ENCODE measurements at regions of chr1 and their contacts with region 1.

Region 1: DNA sequence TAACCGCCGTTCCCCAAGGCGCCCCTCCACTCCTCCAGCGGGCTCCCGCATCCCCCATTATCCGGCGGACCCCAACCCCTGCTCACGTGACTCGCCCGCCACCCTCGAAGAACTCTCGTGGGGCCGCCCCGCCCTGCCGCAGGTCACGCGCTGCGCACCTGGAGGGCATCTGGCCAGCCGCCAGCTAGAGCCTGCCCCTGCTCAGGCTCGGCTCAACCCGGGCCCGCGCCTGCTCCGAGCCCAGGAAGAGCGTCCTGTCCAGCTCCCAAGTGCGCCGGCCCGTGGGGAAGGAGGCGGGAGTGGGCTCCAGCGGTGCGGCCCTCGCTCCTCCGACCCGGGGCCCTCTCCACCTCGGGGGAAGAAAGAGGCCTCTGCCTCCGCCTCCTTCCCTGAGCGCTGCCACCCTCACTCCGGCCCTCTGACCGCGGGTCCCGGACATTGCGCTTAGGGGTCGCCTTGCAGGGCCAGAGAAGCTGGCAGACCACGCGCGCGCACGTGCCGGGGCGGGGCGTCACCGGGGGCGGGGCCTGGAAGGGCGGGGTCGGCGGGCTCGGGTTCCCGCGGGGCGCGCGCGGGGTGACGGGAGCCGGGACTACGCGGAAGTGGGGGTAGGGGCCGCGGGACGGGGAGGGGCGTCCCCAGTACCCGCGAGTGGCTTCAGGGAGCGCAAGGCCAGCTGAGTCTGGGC is 28.4 kb downstream of the HMGN2 start:
- DNase-seq: peak; percentile 64 to 93 (median 81)
- ATAC-seq: peak; percentile 77 to 81 (median 79)
- H3K4me3 ChIP-seq: peak overlapping the region; percentile 88 to 89
- H3K4me3 Mint-ChIP-seq: peak overlapping the region; percentile 77 to 86 (median 86)
- H3K27ac ChIP-seq: peak overlapping the region; percentile 92
- H3K27ac Mint-ChIP-seq: peak overlapping the region; percentile 93 to 94
- H3K4me1 ChIP-seq: peaks cover 5 to 24% of the 10 kb centered on the region in 2 experiments
- H3K4me1 Mint-ChIP-seq: peaks cover 7 to 17% (median 12%) of the 10 kb centered on the region in 3 donors
- H3K27me3 ChIP-seq: no peaks in the 10 kb centered on the region
- H3K27me3 Mint-ChIP-seq: no peaks in the 10 kb centered on the region

Region 2: GRCh38 chr1:26541816-26542711 is 41.4 kb after region 1 on chr1:
- CTCF ChIA-PET with region 1: interaction called in 1 of 2 experiments, 11 read pairs
- POLR2A ChIA-PET with region 1: interaction called in 1 of 2 experiments, 6 read pairs
- DNase-seq: peak; percentile 55 to 85 (median 70)
- ATAC-seq: peak; percentile 66 to 78 (median 76)
- H3K4me3 ChIP-seq: peak overlapping the region; percentile 35 to 36
- H3K4me3 Mint-ChIP-seq: peak overlapping the region; percentile 69 to 79 (median 72)
- H3K27ac ChIP-seq: peak overlapping the region; percentile 91
- H3K27ac Mint-ChIP-seq: peak overlapping the region; percentile 97
- H3K4me1 ChIP-seq: peaks cover 55 to 98% of the 10 kb centered on the region in 2 experiments
- H3K4me1 Mint-ChIP-seq: peaks cover 87 to 92% (median 87%) of the 10 kb centered on the region in 3 donors
- H3K27me3 ChIP-seq: no peaks in the 10 kb centered on the region
- H3K27me3 Mint-ChIP-seq: no peaks in the 10 kb centered on the region

Region 3: GRCh38 chr1:26799479-26800142 is 299.0 kb after region 1 on chr1:
- CTCF ChIA-PET with region 1: no interaction called
- POLR2A ChIA-PET with region 1: no interaction called
- DNase-seq: peak in 2 of 35 experiments; percentile 13 to 41
- ATAC-seq: peak; percentile 60 to 66 (median 66)
- H3K4me3 ChIP-seq: no peak overlapping the region
- H3K4me3 Mint-ChIP-seq: peak overlapping the region; percentile 49 to 72 (median 63)
- H3K27ac ChIP-seq: peak overlapping the region; percentile 82
- H3K27ac Mint-ChIP-seq: peak overlapping the region; percentile 96 to 97
- H3K4me1 ChIP-seq: peaks cover 13 to 33% of the 10 kb centered on the region in 2 experiments
- H3K4me1 Mint-ChIP-seq: peaks cover 33 to 36% (median 35%) of the 10 kb centered on the region in 3 donors
- H3K27me3 ChIP-seq: no peaks in the 10 kb centered on the region
- H3K27me3 Mint-ChIP-seq: no peaks in the 10 kb centered on the region